Ascending aorta (tissue), 2 donors: ENCODE measurements at regions of chr15 and their contacts with region 1.

Region 1: GRCh38 chr15:39396979-39397615 is 183.8 kb upstream of the THBS1 start:
- DNase-seq: peak in 1 of 2 donors; percentile 21
- H3K4me3 ChIP-seq: no peak overlapping the region
- H3K27ac ChIP-seq: no peak overlapping the region
- H3K4me1 ChIP-seq: no peaks in the 10 kb centered on the region
- H3K27me3 ChIP-seq: no peaks in the 10 kb centered on the region
- CTCF ChIP-seq: no peak

Region 2: GRCh38 chr15:39232512-39232911 is 164.6 kb before region 1 on chr15:
- intact Hi-C with region 1: no loop called
- DNase-seq: no peak
- H3K4me3 ChIP-seq: no peak overlapping the region
- H3K27ac ChIP-seq: no peak overlapping the region
- H3K4me1 ChIP-seq: no peaks in the 10 kb centered on the region
- H3K27me3 ChIP-seq: no peaks in the 10 kb centered on the region
- CTCF ChIP-seq: no peak

Region 3: GRCh38 chr15:39344662-39345141 is 52.4 kb before region 1 on chr15:
- intact Hi-C with region 1: loop called (anchors 5 kb)
- DNase-seq: no peak
- H3K4me3 ChIP-seq: no peak overlapping the region
- H3K27ac ChIP-seq: no peak overlapping the region
- H3K4me1 ChIP-seq: no peaks in the 10 kb centered on the region
- H3K27me3 ChIP-seq: no peaks in the 10 kb centered on the region
- CTCF ChIP-seq: no peak